ENCODE measurements at regions of chr2 and their contacts with region 1.

Region 1: GRCh38 chr2:17672583-17673317 is 80.9 kb downstream of the SMC6 start:
- DNase-seq: no peak
- H3K4me3 ChIP-seq: no peak overlapping the region
- H3K27ac ChIP-seq: no peak overlapping the region
- H3K4me1 ChIP-seq: no peaks in the 10 kb centered on the region
- H3K27me3 ChIP-seq: no peaks in the 10 kb centered on the region
- CTCF ChIP-seq: 0 out of 2 replicates have a peak, but pooled peaks have one; percentile 24

Region 2: DNA sequence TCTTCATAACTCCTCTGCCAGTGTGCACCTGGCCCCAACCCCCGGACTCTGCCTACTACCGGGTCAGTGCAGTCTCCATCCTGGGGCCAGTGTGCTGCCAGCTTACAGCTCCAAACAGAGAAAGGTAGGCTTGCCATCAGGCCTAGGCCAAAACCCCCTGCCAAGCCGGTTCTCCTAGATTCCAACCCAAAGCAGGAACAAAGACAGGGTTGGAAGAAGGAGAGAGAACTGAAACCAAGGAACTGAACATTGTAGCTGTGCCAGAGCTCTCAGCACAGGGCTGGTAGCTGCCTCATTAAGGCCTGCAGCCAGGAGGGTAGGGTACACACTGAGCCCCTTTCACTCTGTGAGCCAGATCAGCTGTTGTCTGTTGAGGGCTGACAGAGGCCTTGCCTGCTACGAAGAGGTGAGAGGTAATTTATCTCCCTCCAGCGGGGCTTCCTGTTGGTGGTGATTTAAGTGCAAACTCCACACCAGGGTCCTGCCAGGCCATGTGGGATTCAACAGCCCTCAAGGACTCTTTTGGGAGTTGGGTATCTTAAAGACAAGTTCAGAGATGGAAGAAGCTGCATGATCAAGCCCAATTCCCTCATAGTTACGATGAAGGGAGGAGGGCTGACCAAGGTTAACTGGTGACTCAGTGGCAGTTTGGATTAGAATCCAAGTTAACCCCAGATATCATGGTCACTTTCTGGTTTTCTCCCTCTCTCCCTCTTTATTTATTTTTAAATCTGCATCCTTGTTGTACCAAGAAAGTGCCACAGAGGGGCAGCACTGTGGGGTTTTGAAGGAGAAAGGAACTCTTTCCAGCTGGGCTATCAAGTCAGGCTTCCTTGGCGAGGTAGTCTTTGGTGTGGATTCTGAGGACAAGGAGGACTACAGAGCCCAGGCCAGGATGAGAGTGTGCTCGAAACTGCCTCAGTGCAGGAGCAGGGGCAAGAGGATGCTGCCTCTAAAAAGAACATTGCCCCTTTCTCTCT is 1055.2 kb before region 1 on chr2:
- CTCF ChIA-PET with region 1: no interaction called
- POLR2A ChIA-PET with region 1: no interaction called
- intact Hi-C with region 1: loop called (anchors 5 kb)
- DNase-seq: peak; percentile 74 to 88
- H3K4me3 ChIP-seq: no peak overlapping the region
- H3K27ac ChIP-seq: peak overlapping the region; percentile 71
- H3K4me1 ChIP-seq: peaks cover 73% of the 10 kb centered on the region
- H3K27me3 ChIP-seq: no peaks in the 10 kb centered on the region
- CTCF ChIP-seq: peak; percentile 65

Region 3: GRCh38 chr2:17309741-17310339 is 362.9 kb before region 1 on chr2:
- CTCF ChIA-PET with region 1: no interaction called
- POLR2A ChIA-PET with region 1: no interaction called
- intact Hi-C with region 1: loop called (anchors 5 kb)
- DNase-seq: peak; percentile 31 to 65
- H3K4me3 ChIP-seq: no peak overlapping the region
- H3K27ac ChIP-seq: no peak overlapping the region
- H3K4me1 ChIP-seq: peaks cover 35% of the 10 kb centered on the region
- H3K27me3 ChIP-seq: no peaks in the 10 kb centered on the region
- CTCF ChIP-seq: peak; percentile 90

Region 4: GRCh38 chr2:17470855-17471641 is 201.7 kb before region 1 on chr2:
- CTCF ChIA-PET with region 1: interaction called, 5 read pairs
- POLR2A ChIA-PET with region 1: no interaction called
- intact Hi-C with region 1: loop called (anchors 2 kb)
- DNase-seq: peak in 1 of 2 experiments; percentile 20
- H3K4me3 ChIP-seq: no peak overlapping the region
- H3K27ac ChIP-seq: no peak overlapping the region
- H3K4me1 ChIP-seq: no peaks in the 10 kb centered on the region
- H3K27me3 ChIP-seq: no peaks in the 10 kb centered on the region
- CTCF ChIP-seq: peak; percentile 75

Region 5: GRCh38 chr2:17536416-17536815 is 136.3 kb before region 1 on chr2:
- CTCF ChIA-PET with region 1: no interaction called
- POLR2A ChIA-PET with region 1: no interaction called
- intact Hi-C with region 1: no loop called
- DNase-seq: no peak
- H3K4me3 ChIP-seq: no peak overlapping the region
- H3K27ac ChIP-seq: no peak overlapping the region
- H3K4me1 ChIP-seq: peaks cover 14% of the 10 kb centered on the region; the same call in 1 of the 2 replicates
- H3K27me3 ChIP-seq: no peaks in the 10 kb centered on the region
- CTCF ChIP-seq: no peak

Region 6: GRCh38 chr2:17594533-17595401 is 78.0 kb before region 1 on chr2:
- CTCF ChIA-PET with region 1: no interaction called
- POLR2A ChIA-PET with region 1: no interaction called
- intact Hi-C with region 1: no loop called
- DNase-seq: no peak
- H3K4me3 ChIP-seq: no peak overlapping the region
- H3K27ac ChIP-seq: no peak overlapping the region
- H3K4me1 ChIP-seq: peaks cover 40% of the 10 kb centered on the region
- H3K27me3 ChIP-seq: no peaks in the 10 kb centered on the region
- CTCF ChIP-seq: no peak

Region 7: GRCh38 chr2:18940184-18940583 is 1267.4 kb after region 1 on chr2:
- CTCF ChIA-PET with region 1: no interaction called
- POLR2A ChIA-PET with region 1: no interaction called
- intact Hi-C with region 1: no loop called
- DNase-seq: no peak
- H3K4me3 ChIP-seq: no peak overlapping the region
- H3K27ac ChIP-seq: no peak overlapping the region
- H3K4me1 ChIP-seq: no peaks in the 10 kb centered on the region
- H3K27me3 ChIP-seq: no peaks in the 10 kb centered on the region
- CTCF ChIP-seq: no peak